MCF 10A (cell line): ENCODE measurements at regions of chr1 and their contacts with region 1.

Region 1: DNA sequence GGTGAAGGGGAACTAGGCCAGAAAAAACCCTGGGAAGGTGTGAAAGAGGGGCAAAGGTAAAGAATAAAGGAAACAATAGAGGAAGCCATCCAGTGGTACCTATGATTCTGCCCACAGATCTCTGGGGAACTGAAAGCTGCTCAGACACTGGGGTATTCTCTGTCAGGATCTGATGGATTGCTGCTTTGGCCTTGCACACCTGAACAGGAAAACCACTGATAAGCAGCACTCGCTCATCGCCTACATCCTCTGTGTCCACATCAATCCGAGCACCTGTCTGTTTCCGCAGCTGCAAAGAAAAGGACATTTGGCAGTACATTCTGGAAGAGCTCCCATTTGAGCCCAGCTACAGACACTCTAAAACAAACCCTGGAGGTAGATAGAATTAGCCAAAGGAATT is 10.4 kb downstream of the TDRKH start:
- DNase-seq: no peak
- H3K4me3 Mint-ChIP-seq: no peak overlapping the region
- H3K27ac Mint-ChIP-seq: peak overlapping the region; percentile 16
- H3K4me1 Mint-ChIP-seq: no peaks in the 10 kb centered on the region
- H3K27me3 Mint-ChIP-seq: no peaks in the 10 kb centered on the region
- CTCF ChIP-seq: no peak

Region 2: GRCh38 chr1:151790071-151790940 is 10.5 kb after region 1 on chr1 and contains the start of gene TDRKH:
- CTCF ChIA-PET with region 1: interaction called, 5 read pairs
- POLR2A ChIA-PET with region 1: interaction called, 10 read pairs
- intact Hi-C with region 1: no loop called
- DNase-seq: peak; percentile 100
- H3K4me3 Mint-ChIP-seq: peak within 1 kb of the TSS; percentile 83
- H3K27ac Mint-ChIP-seq: peak within 1 kb of the TSS; percentile 47
- H3K4me1 Mint-ChIP-seq: peaks cover 9% of the 10 kb centered on the region
- H3K27me3 Mint-ChIP-seq: no peaks in the 10 kb centered on the region
- CTCF ChIP-seq: peak; percentile 26
- total RNA-seq, gene TDRKH: 5.6 and 10.6 TPM in 2 replicates

Region 3: DNA sequence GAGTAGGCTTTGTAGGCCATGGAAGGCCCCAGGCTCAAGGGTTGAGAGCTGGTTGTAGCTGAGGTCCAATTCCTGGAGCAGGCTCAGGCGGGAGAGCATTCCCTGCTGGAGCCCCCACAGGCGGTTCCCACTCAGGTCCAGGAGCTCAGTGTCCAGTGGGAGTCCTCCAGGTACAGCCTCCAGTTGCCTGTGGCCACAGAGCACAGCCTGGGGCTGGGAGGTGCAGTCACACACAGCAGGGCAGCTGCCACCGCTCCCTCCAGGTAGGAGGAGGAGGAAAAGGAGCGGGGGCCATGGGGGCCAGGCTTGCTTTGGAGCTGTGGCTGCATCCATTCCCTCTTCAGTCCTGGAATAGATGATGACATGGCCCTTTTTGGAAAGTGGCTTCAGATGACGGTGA is 22.5 kb after region 1 on chr1:
- CTCF ChIA-PET with region 1: no interaction called
- POLR2A ChIA-PET with region 1: no interaction called
- intact Hi-C with region 1: no loop called
- DNase-seq: no peak
- H3K4me3 Mint-ChIP-seq: no peak overlapping the region
- H3K27ac Mint-ChIP-seq: no peak overlapping the region
- H3K4me1 Mint-ChIP-seq: peaks cover 8% of the 10 kb centered on the region
- H3K27me3 Mint-ChIP-seq: peaks cover 71% of the 10 kb centered on the region
- CTCF ChIP-seq: no peak